ENCODE measurements at regions of chr1 and their contacts with region 1.

Region 1: GRCh38 chr1:205354259-205354904 is 2.3 kb downstream of the KLHDC8A start:
- DNase-seq: peak in 1 of 2 donors; percentile 44
- H3K4me3 ChIP-seq: no peak overlapping the region
- CTCF ChIP-seq: peak in 1 of 3 donors; percentile 43
- POLR2A ChIP-seq: no peak

Region 2: DNA sequence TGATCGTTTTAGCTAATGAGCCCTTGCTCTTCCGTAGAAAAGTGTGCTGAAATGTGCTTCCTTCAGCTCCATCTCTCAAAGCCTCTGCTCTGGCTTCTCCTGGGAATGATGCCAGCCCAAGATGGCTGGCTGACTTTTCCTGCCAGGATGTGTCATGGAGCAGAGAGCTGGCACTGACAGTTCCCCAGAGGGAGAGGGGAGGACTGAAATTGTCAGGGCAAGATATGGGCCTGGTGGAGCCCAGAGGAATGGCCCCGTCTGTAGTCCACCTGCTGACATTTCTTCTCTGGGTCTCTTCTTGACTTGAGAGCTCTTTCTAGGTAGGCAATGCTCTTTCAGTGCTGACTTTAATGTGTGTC is 969.4 kb before region 1 on chr1:
- intact Hi-C with region 1: no loop called
- DNase-seq: no peak
- H3K4me3 ChIP-seq: no peak overlapping the region
- CTCF ChIP-seq: no peak
- POLR2A ChIP-seq: no peak

Region 3: GRCh38 chr1:204858363-204858821 is 496.0 kb before region 1 on chr1:
- intact Hi-C with region 1: no loop called
- DNase-seq: no peak
- H3K4me3 ChIP-seq: no peak overlapping the region
- CTCF ChIP-seq: no peak
- POLR2A ChIP-seq: no peak

Region 4: GRCh38 chr1:205061227-205061626 is 293.2 kb before region 1 on chr1:
- intact Hi-C with region 1: no loop called
- DNase-seq: no peak
- H3K4me3 ChIP-seq: no peak overlapping the region
- CTCF ChIP-seq: no peak
- POLR2A ChIP-seq: no peak

Region 5: DNA sequence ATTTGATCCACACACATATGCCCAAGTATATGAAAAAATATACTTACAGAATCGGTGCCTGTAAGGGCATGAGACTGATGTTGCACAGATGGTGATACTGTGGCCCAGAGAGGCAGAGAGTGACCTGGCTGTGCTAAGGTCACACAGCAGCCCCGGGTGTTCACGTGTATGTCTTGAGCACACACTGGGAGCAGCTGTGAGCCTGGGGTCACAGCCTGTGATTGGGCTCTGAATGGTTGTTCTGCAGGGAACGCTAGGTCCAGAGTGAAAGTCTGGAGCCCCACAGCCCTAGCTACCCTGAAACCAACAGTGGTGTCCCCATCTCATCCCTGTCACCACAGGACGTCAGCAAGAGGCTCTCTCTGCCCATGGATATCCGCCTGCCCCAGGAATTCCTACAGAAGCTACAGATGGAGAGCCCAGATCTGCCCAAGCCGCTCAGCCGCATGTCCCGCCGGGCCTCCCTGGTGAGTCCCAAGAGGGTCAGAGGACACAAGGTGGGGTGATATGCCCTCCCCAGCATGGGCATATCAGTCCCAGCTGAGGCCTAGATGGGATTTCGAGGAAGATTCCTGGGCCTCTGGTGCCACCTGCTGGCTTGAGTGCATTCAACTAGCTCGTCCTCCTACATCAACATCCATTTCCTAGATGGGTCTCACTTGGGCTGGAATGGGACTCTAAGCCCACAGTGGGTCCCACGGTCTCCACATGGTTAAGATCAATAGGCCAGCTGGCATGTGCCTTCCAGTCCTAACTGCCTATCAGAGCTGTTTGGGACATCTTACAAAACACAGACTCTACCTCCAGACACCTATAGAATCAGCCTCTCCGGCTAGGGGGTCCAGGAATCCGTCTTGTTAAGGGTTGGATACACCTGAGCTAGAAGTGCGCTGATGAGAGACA is 169.8 kb after region 1 on chr1:
- intact Hi-C with region 1: loop called (anchors 5 kb)
- DNase-seq: peak; percentile 63 to 93
- H3K4me3 ChIP-seq: no peak overlapping the region
- CTCF ChIP-seq: peak in 1 of 3 donors; percentile 31
- POLR2A ChIP-seq: no peak

Measured in lower leg skin (tissue), 4 donors.